ENCODE measurements at regions of chr19 and their contacts with region 1.

Region 1: DNA sequence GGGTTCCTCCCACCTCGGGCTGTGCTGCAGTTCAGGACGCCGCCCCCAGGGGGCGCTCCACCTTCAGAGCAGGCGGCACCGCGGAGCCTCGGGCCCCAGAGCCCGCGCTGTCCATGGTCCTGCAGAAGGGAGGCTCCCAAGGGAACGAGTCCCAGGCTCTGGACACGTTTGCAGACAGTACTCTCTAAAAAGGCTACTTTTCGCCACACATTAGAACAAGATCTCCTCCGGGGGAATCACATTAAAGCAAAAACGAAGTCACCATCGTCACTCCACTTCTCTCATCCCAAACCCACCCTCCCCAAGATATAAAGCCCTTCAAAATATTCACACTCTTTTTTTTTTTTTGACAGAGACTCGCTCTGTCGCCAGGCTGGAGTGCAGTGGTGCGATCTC is 4.6 kb upstream of the SIGLEC10 start:
- DNase-seq: no peak
- ATAC-seq: peak; percentile 64
- H3K4me3 ChIP-seq: no peak overlapping the region
- H3K27ac ChIP-seq: no peak overlapping the region
- H3K4me1 ChIP-seq: peaks cover 6% of the 10 kb centered on the region
- H3K27me3 ChIP-seq: no peaks in the 10 kb centered on the region; a peak in 1 of 4 replicates
- CTCF ChIP-seq: peak; percentile 99 to 100 (median 99)
- EP300 ChIP-seq: no peak
- POLR2A ChIP-seq: no peak
- RAD21 ChIP-seq: peak; percentile 89

Region 2: DNA sequence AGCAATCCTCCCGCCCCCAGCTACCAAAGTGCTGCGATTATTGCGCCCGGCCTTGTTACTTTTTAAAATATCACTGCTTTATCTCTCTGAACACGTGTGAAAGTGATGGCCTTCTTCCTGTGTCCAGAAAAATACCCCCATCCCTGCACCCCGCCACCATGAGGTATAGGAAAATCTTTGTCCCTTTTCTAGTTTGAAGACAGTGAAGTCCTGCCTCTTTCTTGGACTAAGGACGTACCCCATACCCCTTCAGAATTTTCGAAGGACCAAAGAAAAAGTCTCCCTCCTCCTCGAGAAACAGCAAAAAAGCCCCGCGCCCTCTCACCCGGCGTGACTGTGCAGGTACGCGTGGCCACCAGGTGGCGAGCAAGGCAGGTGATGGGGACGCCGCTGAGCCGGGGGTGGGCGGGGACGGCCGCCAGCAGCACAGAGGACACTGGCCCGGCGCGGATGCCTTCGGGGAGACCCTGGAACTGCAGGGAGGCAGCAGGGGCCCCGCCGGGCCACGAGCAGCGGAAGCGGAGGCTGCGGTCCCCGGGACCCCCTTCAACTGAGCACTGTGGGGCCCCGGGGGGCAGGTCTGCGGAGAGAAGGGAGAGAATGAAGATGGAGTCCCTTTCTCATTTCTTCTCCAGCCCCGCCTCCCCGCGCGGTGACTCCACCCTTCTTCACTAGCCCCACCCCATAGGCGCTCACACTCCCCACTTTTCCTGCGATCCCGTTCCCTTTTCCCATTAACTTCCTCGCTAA is 83.3 kb before region 1 on chr19:
- CTCF ChIA-PET with region 1: interaction called, 7 read pairs
- POLR2A ChIA-PET with region 1: interaction called, 5 read pairs
- RAD21 ChIA-PET with region 1: interaction called, 10 read pairs
- SMC1A ChIA-PET with region 1: interaction called, 5 read pairs
- in situ Hi-C with region 1: no loop called
- intact Hi-C with region 1: no loop called
- DNase-seq: peak; percentile 24
- ATAC-seq: peak; percentile 91
- H3K4me3 ChIP-seq: peak overlapping the region; percentile 60
- H3K27ac ChIP-seq: peak overlapping the region; percentile 22
- H3K4me1 ChIP-seq: peaks cover 5% of the 10 kb centered on the region
- H3K27me3 ChIP-seq: no peaks in the 10 kb centered on the region
- CTCF ChIP-seq: peak; percentile 83 to 93 (median 88)
- EP300 ChIP-seq: no peak
- POLR2A ChIP-seq: peak; percentile 26; the same call in 1 of the 2 replicates
- RAD21 ChIP-seq: peak; percentile 84

Region 3: GRCh38 chr19:51393959-51394836 is 27.9 kb before region 1 on chr19:
- CTCF ChIA-PET with region 1: interaction called, 39 read pairs
- POLR2A ChIA-PET with region 1: interaction called, 37 read pairs
- RAD21 ChIA-PET with region 1: interaction called, 51 read pairs
- SMC1A ChIA-PET with region 1: interaction called, 43 read pairs
- in situ Hi-C with region 1: no loop called
- intact Hi-C with region 1: loop called (anchors 2 kb)
- DNase-seq: peak; percentile 99
- ATAC-seq: peak; percentile 91
- H3K4me3 ChIP-seq: peak overlapping the region; percentile 84
- H3K27ac ChIP-seq: peak overlapping the region; percentile 97
- H3K4me1 ChIP-seq: peaks cover 19% of the 10 kb centered on the region
- H3K27me3 ChIP-seq: no peaks in the 10 kb centered on the region
- CTCF ChIP-seq: peak; percentile 2 to 29 (median 28); a peak in 2 of 6 replicates
- EP300 ChIP-seq: peak in 1 of 2 experiments; percentile 66; a peak in 2 of 4 replicates
- POLR2A ChIP-seq: peak; percentile 83
- RAD21 ChIP-seq: peak; percentile 53

Region 4: GRCh38 chr19:51441410-51442390 is 19.6 kb after region 1 on chr19:
- CTCF ChIA-PET with region 1: interaction called, 142 read pairs
- POLR2A ChIA-PET with region 1: interaction called, 5 read pairs
- RAD21 ChIA-PET with region 1: interaction called, 30 read pairs
- SMC1A ChIA-PET with region 1: interaction called, 14 read pairs
- in situ Hi-C with region 1: no loop called
- intact Hi-C with region 1: loop called (anchors 2 kb)
- DNase-seq: peak; percentile 91
- ATAC-seq: peak; percentile 94
- H3K4me3 ChIP-seq: peak overlapping the region; percentile 49; the same call in 1 of the 2 replicates
- H3K27ac ChIP-seq: no peak overlapping the region
- H3K4me1 ChIP-seq: peaks cover 27% of the 10 kb centered on the region
- H3K27me3 ChIP-seq: peaks cover 0 to 4% of the 10 kb centered on the region in 2 experiments; a peak in 2 of 4 replicates
- CTCF ChIP-seq: peak in 2 of 3 experiments; percentile 4 to 16; a peak in 2 of 6 replicates
- EP300 ChIP-seq: peak; percentile 56 to 73
- POLR2A ChIP-seq: no peak
- RAD21 ChIP-seq: no peak

Region 5: GRCh38 chr19:51514866-51515481 is 92.9 kb after region 1 on chr19:
- CTCF ChIA-PET with region 1: interaction called, 20 read pairs
- POLR2A ChIA-PET with region 1: no interaction called
- RAD21 ChIA-PET with region 1: interaction called, 3 read pairs
- SMC1A ChIA-PET with region 1: interaction called, 4 read pairs
- in situ Hi-C with region 1: no loop called
- intact Hi-C with region 1: loop called (anchors 5 kb)
- DNase-seq: peak; percentile 31
- ATAC-seq: peak; percentile 76
- H3K4me3 ChIP-seq: no peak overlapping the region
- H3K27ac ChIP-seq: no peak overlapping the region
- H3K4me1 ChIP-seq: no peaks in the 10 kb centered on the region
- H3K27me3 ChIP-seq: peaks cover 0 to 7% of the 10 kb centered on the region in 2 experiments; a peak in 1 of 4 replicates
- CTCF ChIP-seq: peak; percentile 72 to 84 (median 75)
- EP300 ChIP-seq: no peak
- POLR2A ChIP-seq: no peak
- RAD21 ChIP-seq: peak; percentile 58

Measured in GM12878 (cell line).